ENCODE measurements at regions of chr3 and their contacts with region 1.

Region 1: GRCh38 chr3:188331166-188331565 is 177.2 kb downstream of the LPP start:
- DNase-seq: no peak
- ATAC-seq: no peak
- H3K4me3 Mint-ChIP-seq: no peak overlapping the region
- H3K27ac Mint-ChIP-seq: no peak overlapping the region
- H3K4me1 Mint-ChIP-seq: peaks cover 30% of the 10 kb centered on the region
- H3K27me3 Mint-ChIP-seq: no peaks in the 10 kb centered on the region

Region 2: DNA sequence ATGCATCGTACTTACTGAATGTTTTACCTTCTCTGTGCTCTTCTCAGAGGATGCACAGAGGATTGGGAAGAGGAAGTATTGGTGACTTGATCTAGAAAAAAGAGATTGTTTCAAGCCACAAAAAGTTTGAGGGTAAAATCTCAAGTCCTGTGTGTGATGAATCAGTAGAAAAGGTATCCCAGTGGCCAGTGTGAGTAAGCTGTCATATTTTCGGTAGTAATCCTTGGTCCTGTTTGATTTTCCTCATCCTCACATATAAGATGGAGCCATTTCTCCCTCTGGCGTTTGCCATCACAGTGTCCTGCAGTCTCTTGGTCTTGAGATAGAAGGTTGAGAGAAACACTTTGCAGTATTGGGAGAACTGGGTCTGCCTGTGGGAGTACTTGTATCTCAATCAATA is 10.4 kb before region 1 on chr3:
- CTCF ChIA-PET with region 1: interaction called, 3 read pairs
- POLR2A ChIA-PET with region 1: interaction called, 10 read pairs
- DNase-seq: no peak
- ATAC-seq: no peak
- H3K4me3 Mint-ChIP-seq: no peak overlapping the region
- H3K27ac Mint-ChIP-seq: no peak overlapping the region
- H3K4me1 Mint-ChIP-seq: peaks cover 48% of the 10 kb centered on the region
- H3K27me3 Mint-ChIP-seq: no peaks in the 10 kb centered on the region

Region 3: GRCh38 chr3:188358787-188359493 is 27.8 kb after region 1 on chr3:
- CTCF ChIA-PET with region 1: no interaction called
- POLR2A ChIA-PET with region 1: no interaction called
- DNase-seq: peak; percentile 52
- ATAC-seq: peak; percentile 80
- H3K4me3 Mint-ChIP-seq: peak overlapping the region; percentile 61
- H3K27ac Mint-ChIP-seq: peak overlapping the region; percentile 86
- H3K4me1 Mint-ChIP-seq: peaks cover 46% of the 10 kb centered on the region
- H3K27me3 Mint-ChIP-seq: no peaks in the 10 kb centered on the region

Region 4: DNA sequence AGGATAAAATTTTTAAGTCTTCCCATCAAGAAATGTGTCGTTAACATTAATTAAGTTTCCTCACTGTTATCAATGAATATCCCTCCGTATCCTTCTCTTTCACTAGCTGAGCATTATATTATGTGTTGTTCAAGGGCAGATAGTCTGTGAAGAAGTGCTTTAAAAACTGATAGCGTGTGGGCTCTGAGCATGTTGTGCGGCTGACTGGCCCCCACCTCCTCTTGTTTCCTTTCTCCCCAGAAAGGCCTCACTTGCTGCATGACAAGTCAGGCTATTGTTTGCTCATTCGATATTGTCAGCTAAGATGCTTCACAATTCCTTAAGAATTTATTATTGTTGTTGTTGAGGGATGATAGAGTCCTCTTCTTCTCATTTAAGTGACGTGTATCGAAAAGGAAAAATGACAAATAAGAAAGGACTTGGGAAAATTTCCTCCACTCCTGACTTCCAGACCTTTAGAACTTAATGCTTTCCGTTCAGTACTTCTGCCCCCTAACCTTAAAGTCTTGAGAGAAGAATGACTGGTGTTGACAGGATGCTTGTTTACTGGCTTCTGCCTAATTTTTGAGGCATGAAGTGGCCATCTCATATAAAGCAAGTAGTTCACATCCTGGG is 121.1 kb after region 1 on chr3:
- CTCF ChIA-PET with region 1: no interaction called
- POLR2A ChIA-PET with region 1: no interaction called
- DNase-seq: no peak
- ATAC-seq: no peak
- H3K4me3 Mint-ChIP-seq: no peak overlapping the region
- H3K27ac Mint-ChIP-seq: no peak overlapping the region
- H3K4me1 Mint-ChIP-seq: peaks cover 9% of the 10 kb centered on the region
- H3K27me3 Mint-ChIP-seq: no peaks in the 10 kb centered on the region

Measured in activated CD8-positive, alpha-beta T cell treated with anti-CD3 and anti-CD28 coated beads, Interleukin-2, amount 10 ng/mL, durations not matched to agents 7 days and 5 days (primary cell).